Activated T-helper 1 cell treated with anti-CD3 and anti-CD28 coated beads, Interleukin-12 subunit alpha, Interleukin-12 subunit beta, Interleukin-2, Interleukin-4 antibody, amounts not matched to agents 30 ng/mL and 10 ng/mL and 1 ng/mL, durations not matched to agents 14 hours and 24 hours and 36 hours (primary cell): ENCODE measurements at regions of chr10 and their contacts with region 1.

Region 1: GRCh38 chr10:72692057-72692910 is at the start of gene MCU:
- DNase-seq: peak; percentile 90
- H3K4me3 Mint-ChIP-seq: peak within 1 kb of the TSS; percentile 85
- H3K27ac Mint-ChIP-seq: peak within 1 kb of the TSS; percentile 66
- H3K4me1 Mint-ChIP-seq: peaks cover 37% of the 10 kb centered on the region
- H3K27me3 Mint-ChIP-seq: peaks cover 7% of the 10 kb centered on the region
- total RNA-seq, gene MCU: 12.6 and 17.5 TPM in 2 replicates

Region 2: GRCh38 chr10:72254813-72255568 is 437.3 kb before region 1 on chr10:
- intact Hi-C with region 1: loop called (anchors 5 kb)
- DNase-seq: peak; percentile 36
- H3K4me3 Mint-ChIP-seq: peak overlapping the region; percentile 77
- H3K27ac Mint-ChIP-seq: peak overlapping the region; percentile 89
- H3K4me1 Mint-ChIP-seq: peaks cover 82% of the 10 kb centered on the region
- H3K27me3 Mint-ChIP-seq: no peaks in the 10 kb centered on the region

Region 3: DNA sequence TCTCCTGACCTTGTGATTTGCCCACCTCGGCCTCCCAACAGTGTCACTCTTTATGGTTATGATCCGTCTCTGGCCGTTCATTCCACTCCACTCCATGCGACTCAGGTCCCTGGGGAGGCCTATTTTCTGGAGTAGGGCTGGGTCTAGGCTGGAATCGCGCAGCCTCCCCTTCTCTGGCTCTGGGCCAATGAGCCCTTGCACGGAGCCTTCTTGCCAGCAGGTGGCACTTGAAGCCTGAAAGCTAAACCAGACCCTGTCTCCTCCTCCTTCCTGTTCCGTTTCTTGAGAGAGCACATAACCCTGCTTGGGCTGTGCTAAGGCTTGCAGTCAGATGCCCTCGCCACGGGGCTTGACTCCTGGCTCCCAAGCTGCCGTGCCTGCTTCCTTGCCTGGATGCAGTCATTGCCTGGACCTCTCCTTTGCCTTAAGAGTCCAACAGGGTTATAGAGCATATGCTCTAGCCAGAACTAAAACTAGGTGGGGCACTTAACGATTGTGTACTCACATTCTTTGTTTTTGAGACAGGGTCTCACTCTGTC is 328.0 kb before region 1 on chr10:
- intact Hi-C with region 1: loop called (anchors 1 kb)
- DNase-seq: peak; percentile 77
- H3K4me3 Mint-ChIP-seq: no peak overlapping the region
- H3K27ac Mint-ChIP-seq: peak overlapping the region; percentile 51
- H3K4me1 Mint-ChIP-seq: peaks cover 27% of the 10 kb centered on the region
- H3K27me3 Mint-ChIP-seq: peaks cover 6% of the 10 kb centered on the region

Region 4: GRCh38 chr10:72612203-72612826 is 80.0 kb before region 1 on chr10:
- intact Hi-C with region 1: no loop called
- DNase-seq: no peak
- H3K4me3 Mint-ChIP-seq: no peak overlapping the region
- H3K27ac Mint-ChIP-seq: no peak overlapping the region
- H3K4me1 Mint-ChIP-seq: no peaks in the 10 kb centered on the region
- H3K27me3 Mint-ChIP-seq: no peaks in the 10 kb centered on the region

Region 5: GRCh38 chr10:72625608-72626443 is 66.5 kb before region 1 on chr10 and contains the start of gene MICU1:
- intact Hi-C with region 1: loop called (anchors 1 kb)
- DNase-seq: peak; percentile 93
- H3K4me3 Mint-ChIP-seq: peak within 1 kb of the TSS; percentile 96
- H3K27ac Mint-ChIP-seq: peak within 1 kb of the TSS; percentile 94
- H3K4me1 Mint-ChIP-seq: peaks cover 13% of the 10 kb centered on the region
- H3K27me3 Mint-ChIP-seq: peaks cover 6% of the 10 kb centered on the region
- total RNA-seq, gene MICU1: 28.4 and 29.5 TPM in 2 replicates

Region 6: GRCh38 chr10:72712136-72712535 is 19.9 kb after region 1 on chr10:
- intact Hi-C with region 1: no loop called
- DNase-seq: no peak
- H3K4me3 Mint-ChIP-seq: no peak overlapping the region
- H3K27ac Mint-ChIP-seq: no peak overlapping the region
- H3K4me1 Mint-ChIP-seq: no peaks in the 10 kb centered on the region
- H3K27me3 Mint-ChIP-seq: peaks cover 2% of the 10 kb centered on the region

Region 7: DNA sequence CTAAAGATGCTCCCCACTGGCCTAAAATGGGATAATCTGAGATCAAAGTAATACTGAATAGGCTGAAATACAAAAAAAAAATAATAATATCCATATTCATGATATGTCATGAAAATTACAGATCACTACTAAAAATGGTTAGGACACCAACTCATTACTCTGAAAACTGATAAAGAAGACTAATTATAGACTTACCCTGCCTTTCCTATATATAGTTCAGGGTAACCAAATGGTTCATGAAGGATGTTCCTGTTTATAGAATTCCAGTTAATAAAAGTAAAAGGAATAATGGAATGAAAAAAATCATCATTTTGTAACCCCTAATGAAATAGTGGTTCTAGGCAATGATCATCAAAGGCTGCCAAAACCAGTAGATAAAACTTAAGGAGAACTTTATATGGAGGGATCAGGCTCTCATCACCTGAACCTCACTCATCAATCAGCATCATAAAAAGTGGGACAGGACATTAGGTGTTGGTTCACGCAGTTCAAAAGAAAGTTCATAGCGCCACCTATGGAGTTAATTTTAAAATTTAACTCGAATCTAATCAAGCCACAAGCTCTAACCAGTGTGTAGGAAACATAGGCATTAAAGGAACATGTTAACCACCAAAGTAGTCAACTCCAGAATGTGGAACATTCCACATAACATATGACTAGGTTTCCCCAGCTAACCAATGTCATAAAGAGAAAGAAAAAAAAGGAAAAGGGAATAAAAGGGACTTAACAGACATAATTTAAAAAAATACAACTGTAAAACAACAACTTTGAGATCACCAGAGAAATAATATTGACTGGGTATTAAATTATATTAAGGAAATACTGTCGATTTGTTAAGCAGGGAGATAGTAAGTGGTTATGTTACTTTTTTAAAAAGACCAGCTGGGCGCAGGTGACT is 368.7 kb after region 1 on chr10:
- intact Hi-C with region 1: loop called (anchors 10 kb)
- DNase-seq: no peak
- H3K4me3 Mint-ChIP-seq: no peak overlapping the region
- H3K27ac Mint-ChIP-seq: peak overlapping the region; percentile 18
- H3K4me1 Mint-ChIP-seq: peaks cover 19% of the 10 kb centered on the region
- H3K27me3 Mint-ChIP-seq: no peaks in the 10 kb centered on the region